Endothelial cell of umbilical vein (primary cell): ENCODE measurements at regions of chr12 and their contacts with region 1.

Region 1: DNA sequence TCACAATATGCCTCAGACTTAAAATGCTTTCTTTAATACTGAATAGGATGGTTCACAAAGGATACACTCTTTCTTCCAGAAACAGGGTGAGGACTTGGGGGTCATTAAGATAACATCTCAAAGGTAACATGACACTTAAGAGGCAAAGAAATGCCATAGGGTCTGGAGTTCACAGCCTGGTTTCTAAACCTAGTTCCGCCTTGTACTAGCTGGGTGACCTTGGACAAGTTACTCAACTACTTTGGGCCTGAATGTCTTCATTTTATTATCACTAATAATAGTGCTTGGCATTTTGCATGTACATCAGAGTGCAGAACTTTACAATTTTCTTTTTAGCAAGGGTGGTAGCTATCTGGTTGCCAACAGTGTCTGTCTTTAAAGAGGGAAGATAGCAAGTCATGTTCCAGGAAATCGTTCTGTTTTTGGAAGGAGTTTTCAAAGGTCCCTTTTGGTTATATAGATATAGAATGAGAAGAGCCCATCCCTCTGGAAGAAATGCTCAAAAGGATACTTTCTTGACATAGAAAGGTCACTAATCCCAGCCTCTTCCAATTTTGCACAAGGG is 257.8 kb downstream of the NUAK1 start:
- DNase-seq: no peak
- H3K4me3 ChIP-seq: no peak overlapping the region
- H3K27ac ChIP-seq: no peak overlapping the region
- H3K4me1 ChIP-seq: no peaks in the 10 kb centered on the region
- H3K27me3 ChIP-seq: no peaks in the 10 kb centered on the region
- CTCF ChIP-seq: no peak
- POLR2A ChIP-seq: no peak

Region 2: DNA sequence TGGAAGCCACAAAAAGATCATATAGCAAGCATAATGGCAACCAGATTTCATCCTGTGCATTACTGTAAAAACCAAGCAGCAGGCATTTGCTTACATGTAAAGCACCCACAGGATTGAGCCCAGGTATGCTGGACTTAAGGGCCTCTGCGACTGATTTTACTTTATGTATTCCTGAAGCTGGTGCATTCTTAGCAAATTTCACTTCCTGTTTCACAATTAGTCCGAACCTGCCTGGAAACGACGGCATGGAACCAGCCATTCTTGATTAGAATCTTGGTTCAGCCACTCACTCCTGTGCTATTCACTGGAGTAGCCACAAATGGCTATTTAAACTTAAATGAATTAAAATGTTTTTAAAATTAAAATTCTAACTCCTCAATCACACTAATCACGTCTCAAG is 18.7 kb after region 1 on chr12:
- CTCF ChIA-PET with region 1: interaction called, 3 read pairs
- POLR2A ChIA-PET with region 1: no interaction called
- dilution Hi-C with region 1: no loop called
- intact Hi-C with region 1: loop called (anchors 2 kb)
- DNase-seq: no peak
- H3K4me3 ChIP-seq: no peak overlapping the region
- H3K27ac ChIP-seq: no peak overlapping the region
- H3K4me1 ChIP-seq: no peaks in the 10 kb centered on the region
- H3K27me3 ChIP-seq: peaks cover 0 to 6% of the 10 kb centered on the region in 2 experiments
- CTCF ChIP-seq: no peak
- POLR2A ChIP-seq: no peak

Region 3: GRCh38 chr12:105967038-105967776 is 86.3 kb after region 1 on chr12:
- CTCF ChIA-PET with region 1: no interaction called
- POLR2A ChIA-PET with region 1: no interaction called
- dilution Hi-C with region 1: no loop called
- intact Hi-C with region 1: no loop called
- DNase-seq: peak; percentile 18
- H3K4me3 ChIP-seq: no peak overlapping the region
- H3K27ac ChIP-seq: peak overlapping the region; percentile 18
- H3K4me1 ChIP-seq: peaks cover 4% of the 10 kb centered on the region
- H3K27me3 ChIP-seq: no peaks in the 10 kb centered on the region
- CTCF ChIP-seq: no peak
- POLR2A ChIP-seq: no peak

Region 4: DNA sequence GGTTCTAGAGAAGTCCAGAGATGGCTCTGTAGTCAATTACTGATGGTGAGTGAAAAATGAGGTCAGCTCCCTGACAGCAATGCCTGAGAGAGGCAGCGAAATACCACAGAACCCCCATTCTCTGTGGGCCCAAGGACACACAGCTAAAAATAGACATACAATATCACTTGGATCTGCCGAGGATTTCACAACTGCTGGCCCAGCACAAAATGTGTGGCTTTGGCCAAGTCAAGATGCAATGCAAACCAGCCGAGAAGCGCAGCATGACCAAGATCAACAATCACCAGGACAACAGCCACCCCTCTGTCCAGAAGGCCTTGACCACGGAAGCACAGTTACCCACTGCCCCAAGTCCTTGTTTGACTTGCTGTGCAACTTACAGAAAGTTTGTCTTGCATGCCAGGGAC is 314.7 kb after region 1 on chr12:
- CTCF ChIA-PET with region 1: no interaction called
- POLR2A ChIA-PET with region 1: no interaction called
- dilution Hi-C with region 1: no loop called
- intact Hi-C with region 1: no loop called
- DNase-seq: no peak
- H3K4me3 ChIP-seq: no peak overlapping the region
- H3K27ac ChIP-seq: no peak overlapping the region
- H3K4me1 ChIP-seq: no peaks in the 10 kb centered on the region
- H3K27me3 ChIP-seq: peaks cover 24 to 37% of the 10 kb centered on the region in 2 experiments
- CTCF ChIP-seq: no peak
- POLR2A ChIP-seq: no peak